Right ventricle myocardium superior (tissue), 1 donor: ENCODE measurements at regions of chr10 and their contacts with region 1.

Region 1: DNA sequence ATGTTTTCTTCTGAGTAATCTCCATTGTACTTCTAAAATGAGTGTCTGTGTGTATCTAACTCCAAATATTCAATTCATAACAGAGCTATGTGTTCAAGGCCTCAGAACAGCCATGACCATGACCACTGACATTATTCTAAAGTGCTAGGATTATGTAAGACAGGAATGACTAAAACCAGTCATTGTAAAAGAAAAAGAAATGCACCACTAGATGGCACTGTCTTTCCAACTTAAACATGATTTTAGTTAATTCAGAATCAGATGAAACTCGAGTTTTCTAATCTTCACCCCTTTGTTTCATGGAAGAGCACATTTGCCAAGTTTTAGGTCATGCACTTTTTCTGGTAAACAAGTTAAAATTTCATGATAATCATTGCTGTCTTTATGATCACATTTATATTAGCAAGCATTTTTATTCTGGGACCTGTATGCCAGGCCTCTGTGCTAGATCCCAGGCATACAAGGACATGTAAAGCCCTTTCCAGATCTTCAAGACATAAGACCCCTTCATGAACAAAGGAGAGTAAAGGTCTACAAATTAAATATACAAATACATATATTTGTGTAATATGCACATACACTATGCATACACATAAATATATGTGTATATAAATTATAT is 26.1 kb upstream of the RSU1 start:
- DNase-seq: no peak
- ATAC-seq: peak; percentile 77

Region 2: GRCh38 chr10:17257466-17258321 is 414.3 kb after region 1 on chr10:
- intact Hi-C with region 1: loop called (anchors 5 kb)
- DNase-seq: no peak
- ATAC-seq: peak; percentile 94